Heart left ventricle (tissue), 16 donors: ENCODE measurements at regions of chr6 and their contacts with region 1.

Region 1: DNA sequence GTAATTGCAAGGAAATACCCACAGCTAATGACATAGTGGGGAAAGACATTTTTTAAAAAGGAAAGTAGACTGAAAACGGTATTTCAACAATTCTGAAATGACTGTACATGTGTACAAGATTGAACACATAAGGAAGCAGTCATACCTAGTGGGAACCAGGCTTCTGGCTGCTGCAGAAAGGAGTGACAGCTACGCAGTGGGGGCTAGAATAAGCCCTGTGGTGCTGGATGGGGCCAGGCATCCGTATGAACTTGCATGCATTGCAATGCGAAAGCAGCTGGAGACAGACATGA is 54.9 kb upstream of the GPR31 start:
- DNase-seq: no peak
- ATAC-seq: no peak
- H3K4me3 ChIP-seq: no peak overlapping the region
- H3K27ac ChIP-seq: no peak overlapping the region
- H3K4me1 ChIP-seq: peaks cover 0 to 2% (median 0%) of the 10 kb centered on the region in 12 donors
- H3K27me3 ChIP-seq: peaks cover 0 to 12% (median 0%) of the 10 kb centered on the region in 9 donors
- CTCF ChIP-seq: no peak
- POLR2A ChIP-seq: no peak

Region 2: DNA sequence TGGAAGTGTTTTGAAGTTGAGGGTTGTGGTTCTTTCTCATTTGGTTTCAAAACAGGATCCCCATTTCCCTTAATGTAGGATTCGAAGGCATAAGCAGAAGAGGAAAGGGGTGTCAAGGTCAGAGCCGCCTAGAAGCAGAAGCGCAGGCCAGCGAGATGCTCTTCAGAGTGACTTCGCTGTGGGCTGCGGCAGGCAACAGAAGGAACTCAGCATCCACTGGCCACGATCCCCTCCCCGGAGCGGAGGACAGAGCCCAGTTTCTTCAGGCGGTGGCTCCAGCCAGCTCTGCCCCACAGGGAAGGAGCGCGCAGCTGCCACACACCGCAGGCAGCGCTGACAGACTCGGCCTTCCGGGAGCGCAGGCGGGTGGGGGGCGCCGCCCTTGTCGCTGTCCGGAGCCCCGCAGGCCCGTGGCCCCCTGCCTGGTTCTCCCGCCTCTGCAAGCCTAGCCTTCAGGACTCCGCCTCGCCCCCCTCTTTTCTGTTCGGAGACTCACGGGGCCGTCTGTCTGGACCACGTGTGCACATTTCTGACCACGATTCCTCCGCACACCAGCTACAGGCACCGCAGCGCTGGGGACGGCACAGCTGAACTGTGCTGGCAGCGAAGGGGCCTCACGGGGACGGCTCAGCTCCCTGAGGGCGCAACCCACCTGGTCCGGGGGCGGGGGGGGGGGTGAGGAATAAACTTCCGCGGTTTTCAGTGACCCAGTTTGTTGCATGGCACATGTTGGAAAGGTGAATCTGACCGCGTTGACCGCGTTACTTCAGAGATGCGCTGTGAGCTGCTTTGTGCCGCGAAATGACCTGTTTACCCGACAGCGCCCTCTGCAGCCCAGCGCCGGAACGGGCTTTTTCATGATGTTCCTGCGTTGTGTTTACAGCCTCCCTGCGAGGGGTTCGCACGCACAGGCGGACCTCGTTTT is 138.3 kb after region 1 on chr6:
- intact Hi-C with region 1: loop called in 1 of 10 experiments (anchors 10 kb)
- DNase-seq: peak; percentile 41 to 82 (median 52)
- ATAC-seq: peak in 3 of 4 donors; percentile 74 to 86 (median 75)
- H3K4me3 ChIP-seq: peak overlapping the region; percentile 11 to 58 (median 48)
- H3K27ac ChIP-seq: peak overlapping the region in 10 of 12 donors; percentile 27 to 73 (median 48)
- H3K4me1 ChIP-seq: peaks cover 0 to 18% (median 11%) of the 10 kb centered on the region in 12 donors
- H3K27me3 ChIP-seq: peaks cover 0 to 43% (median 3%) of the 10 kb centered on the region in 9 donors
- CTCF ChIP-seq: peak; percentile 60 to 79 (median 68)
- POLR2A ChIP-seq: no peak

Region 3: DNA sequence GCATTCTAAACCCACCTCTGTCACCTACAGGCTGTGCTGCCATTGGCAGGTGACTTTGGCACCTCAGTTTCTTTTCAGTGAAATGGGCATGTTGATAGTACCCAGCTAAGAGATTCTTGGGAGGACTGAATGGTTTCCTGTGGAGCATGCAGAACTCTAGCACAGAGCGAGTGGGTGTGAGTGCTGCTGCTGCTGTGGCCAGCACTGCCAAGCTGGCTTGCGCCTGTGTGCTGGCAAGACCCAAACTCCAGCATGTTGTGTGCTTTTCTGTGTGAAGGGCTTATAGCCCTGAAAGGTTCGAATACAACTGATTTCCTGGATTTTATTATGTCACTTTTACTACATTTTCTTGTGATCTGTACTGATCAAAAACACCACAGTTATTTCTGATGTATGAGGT is 706.7 kb after region 1 on chr6:
- intact Hi-C with region 1: loop called in 1 of 10 experiments (anchors 10 kb)
- DNase-seq: no peak
- ATAC-seq: no peak
- H3K4me3 ChIP-seq: no peak overlapping the region
- H3K27ac ChIP-seq: no peak overlapping the region
- H3K4me1 ChIP-seq: no peaks in the 10 kb centered on the region
- H3K27me3 ChIP-seq: no peaks in the 10 kb centered on the region
- CTCF ChIP-seq: no peak
- POLR2A ChIP-seq: no peak